T-cell (primary cell): ENCODE measurements at regions of chr6 and their contacts with region 1.

Region 1: DNA sequence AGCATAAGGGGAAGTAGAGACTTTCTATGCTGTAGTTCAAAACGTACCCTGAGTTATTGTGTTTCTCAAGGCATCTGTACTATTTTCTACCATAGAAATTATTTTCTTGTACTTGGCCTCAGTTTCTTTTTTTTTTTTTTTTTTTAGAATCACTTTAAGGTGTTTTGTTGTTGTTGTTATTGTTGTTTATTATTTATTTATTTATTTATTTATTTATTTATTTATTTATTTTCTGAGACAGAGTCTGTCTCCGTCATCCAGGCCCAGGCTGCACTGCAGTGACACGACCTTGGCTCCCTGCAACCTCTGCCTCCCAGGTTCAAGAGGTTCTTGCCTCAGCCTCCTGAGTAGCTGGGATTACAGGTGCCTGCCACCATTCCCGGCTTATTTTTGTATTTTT is 179.1 kb downstream of the GRIK2 start:
- DNase-seq: no peak
- ATAC-seq: no peak
- H3K4me3 ChIP-seq: no peak overlapping the region
- H3K4me3 Mint-ChIP-seq: no peak overlapping the region
- H3K27ac ChIP-seq: no peak overlapping the region
- H3K27ac Mint-ChIP-seq: no peak overlapping the region
- H3K4me1 ChIP-seq: no peaks in the 10 kb centered on the region
- H3K4me1 Mint-ChIP-seq: no peaks in the 10 kb centered on the region
- H3K27me3 ChIP-seq: no peaks in the 10 kb centered on the region
- H3K27me3 Mint-ChIP-seq: no peaks in the 10 kb centered on the region

Region 2: DNA sequence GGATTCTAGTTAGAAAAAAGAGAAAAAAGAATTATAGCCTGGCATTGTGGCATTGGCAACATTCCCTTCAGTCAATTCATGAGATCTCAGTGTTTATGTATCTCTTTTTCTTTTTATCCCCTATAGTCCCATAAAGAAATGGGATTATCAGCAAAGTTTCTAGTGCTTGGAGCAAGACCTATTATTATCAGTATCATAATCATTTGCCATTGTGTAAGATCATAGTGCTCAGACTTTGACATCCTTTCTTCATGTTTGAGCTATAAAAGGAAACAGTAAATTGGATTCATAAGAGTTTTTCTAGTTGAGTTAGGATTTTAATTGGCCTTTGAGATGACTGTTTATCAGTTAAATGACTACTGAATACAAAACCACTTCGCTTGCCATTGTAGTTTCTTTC is 116.5 kb after region 1 on chr6:
- CTCF ChIA-PET with region 1: no interaction called
- POLR2A ChIA-PET with region 1: interaction called in 1 of 2 experiments, 11 read pairs
- DNase-seq: no peak
- ATAC-seq: no peak
- H3K4me3 ChIP-seq: no peak overlapping the region
- H3K4me3 Mint-ChIP-seq: no peak overlapping the region
- H3K27ac ChIP-seq: no peak overlapping the region
- H3K27ac Mint-ChIP-seq: no peak overlapping the region
- H3K4me1 ChIP-seq: no peaks in the 10 kb centered on the region
- H3K4me1 Mint-ChIP-seq: no peaks in the 10 kb centered on the region
- H3K27me3 ChIP-seq: no peaks in the 10 kb centered on the region
- H3K27me3 Mint-ChIP-seq: no peaks in the 10 kb centered on the region